Activated naive CD4-positive, alpha-beta T cell treated with anti-CD3 and anti-CD28 coated beads for 36 hours (primary cell): ENCODE measurements at regions of chrX and their contacts with region 1.

Region 1: DNA sequence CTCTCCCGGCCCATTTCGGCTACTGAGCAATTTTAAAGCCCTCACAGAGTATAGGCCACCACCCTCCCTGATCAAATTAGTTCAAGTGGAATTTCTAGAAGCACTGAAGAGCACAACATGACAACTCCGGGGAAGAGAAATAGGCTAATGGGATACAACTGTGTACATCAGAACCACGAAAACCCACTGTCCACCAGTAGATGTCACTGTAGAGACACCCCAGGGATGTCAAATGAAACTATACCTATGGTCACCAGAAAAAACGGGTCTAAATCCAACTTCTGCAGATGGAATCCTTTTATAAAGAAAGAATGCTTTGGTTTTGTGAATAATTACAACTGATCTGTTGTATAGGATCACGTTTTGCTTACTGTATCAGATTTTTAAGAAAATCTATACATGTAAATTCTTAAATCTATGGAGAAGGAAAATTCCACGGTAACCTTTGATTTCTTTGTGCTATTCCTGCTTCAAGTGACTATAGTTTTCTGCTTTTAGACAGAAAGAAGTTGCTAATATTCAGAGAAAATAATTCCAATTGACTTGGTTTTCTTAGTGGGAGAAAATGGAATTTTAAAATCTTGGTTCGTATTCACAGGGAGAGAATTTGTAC is 29.5 kb upstream of the MAP3K15 start:
- DNase-seq: peak; percentile 67
- H3K4me3 Mint-ChIP-seq: no peak overlapping the region
- H3K27ac Mint-ChIP-seq: peak overlapping the region; percentile 39
- H3K4me1 Mint-ChIP-seq: peaks cover 21% of the 10 kb centered on the region
- H3K27me3 Mint-ChIP-seq: no peaks in the 10 kb centered on the region

Region 2: GRCh38 chrX:19739683-19740082 is 194.9 kb after region 1 on chrX:
- CTCF ChIA-PET with region 1: no interaction called
- intact Hi-C with region 1: loop called (anchors 5 kb)
- DNase-seq: peak; percentile 58
- H3K4me3 Mint-ChIP-seq: no peak overlapping the region
- H3K27ac Mint-ChIP-seq: peak overlapping the region; percentile 51
- H3K4me1 Mint-ChIP-seq: peaks cover 75% of the 10 kb centered on the region
- H3K27me3 Mint-ChIP-seq: no peaks in the 10 kb centered on the region

Region 3: GRCh38 chrX:20066968-20067708 is 522.3 kb after region 1 on chrX:
- CTCF ChIA-PET with region 1: no interaction called
- intact Hi-C with region 1: loop called (anchors 10 kb)
- DNase-seq: peak; percentile 44
- H3K4me3 Mint-ChIP-seq: no peak overlapping the region
- H3K27ac Mint-ChIP-seq: no peak overlapping the region
- H3K4me1 Mint-ChIP-seq: no peaks in the 10 kb centered on the region
- H3K27me3 Mint-ChIP-seq: no peaks in the 10 kb centered on the region